ENCODE measurements at regions of chr4 and their contacts with region 1.

Region 1: DNA sequence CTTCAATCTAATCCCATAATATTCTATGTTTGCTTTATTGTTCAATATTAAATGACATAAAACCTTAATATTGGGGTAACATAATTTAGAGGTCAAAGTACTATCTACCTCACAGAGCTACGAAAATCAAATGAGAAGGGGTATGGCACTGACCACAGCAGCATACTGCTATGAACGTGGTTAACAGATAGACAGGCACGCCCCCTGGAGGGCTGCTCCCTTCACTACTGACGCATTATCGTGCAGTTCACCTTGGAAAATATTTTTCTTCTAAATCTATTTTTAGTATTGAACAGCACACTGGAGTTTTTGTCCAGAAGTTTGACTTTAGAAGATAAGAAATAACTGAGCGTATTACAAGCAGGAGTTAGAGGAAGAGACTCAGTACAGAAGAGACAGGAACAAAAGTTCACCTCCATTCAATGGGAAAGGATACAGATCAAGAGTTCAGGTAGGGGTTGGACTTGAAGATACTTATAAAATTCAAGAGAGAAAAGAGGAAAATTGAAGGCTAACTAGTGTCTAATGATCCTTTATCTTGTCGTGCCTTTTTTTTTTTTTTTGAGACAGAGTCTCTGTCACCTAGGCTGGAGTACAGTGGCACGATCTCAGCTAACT is 22.7 kb downstream of the MAP9 start:
- DNase-seq: peak; percentile 27
- ATAC-seq: peak; percentile 98
- H3K4me3 ChIP-seq: no peak overlapping the region
- H3K27ac ChIP-seq: no peak overlapping the region
- H3K4me1 ChIP-seq: no peaks in the 10 kb centered on the region
- H3K27me3 ChIP-seq: no peaks in the 10 kb centered on the region
- CTCF ChIP-seq: peak; percentile 78
- EP300 ChIP-seq: no peak
- POLR2A ChIP-seq: no peak
- RAD21 ChIP-seq: 0 out of 2 replicates have a peak, but pooled peaks have one; percentile 60

Region 2: GRCh38 chr4:154551872-154552686 is 802.0 kb before region 1 on chr4:
- CTCF ChIA-PET with region 1: no interaction called
- POLR2A ChIA-PET with region 1: no interaction called
- in situ Hi-C with region 1: no loop called
- intact Hi-C with region 1: loop called (anchors 10 kb)
- DNase-seq: peak; percentile 74
- ATAC-seq: peak; percentile 61
- H3K4me3 ChIP-seq: no peak overlapping the region
- H3K27ac ChIP-seq: no peak overlapping the region
- H3K4me1 ChIP-seq: peaks cover 21% of the 10 kb centered on the region
- H3K27me3 ChIP-seq: no peaks in the 10 kb centered on the region; a peak in 1 of 5 replicates
- CTCF ChIP-seq: peak; percentile 84
- EP300 ChIP-seq: no peak
- POLR2A ChIP-seq: no peak
- RAD21 ChIP-seq: peak; percentile 76; the same call in 1 of the 2 replicates

Region 3: GRCh38 chr4:154626793-154627484 is 727.1 kb before region 1 on chr4:
- CTCF ChIA-PET with region 1: no interaction called
- POLR2A ChIA-PET with region 1: no interaction called
- in situ Hi-C with region 1: loop called (anchors 25 kb)
- intact Hi-C with region 1: no loop called
- DNase-seq: peak; percentile 49
- ATAC-seq: peak; percentile 99
- H3K4me3 ChIP-seq: peak overlapping the region in 1 of 3 experiments; percentile 34; a peak in 1 of 6 replicates
- H3K27ac ChIP-seq: no peak overlapping the region
- H3K4me1 ChIP-seq: peaks cover 18% of the 10 kb centered on the region
- H3K27me3 ChIP-seq: peaks cover 0 to 33% of the 10 kb centered on the region in 2 experiments; a peak in 4 of 5 replicates
- CTCF ChIP-seq: peak; percentile 81
- EP300 ChIP-seq: no peak
- POLR2A ChIP-seq: no peak
- RAD21 ChIP-seq: peak; percentile 70

Region 4: GRCh38 chr4:154807042-154807630 is 546.9 kb before region 1 on chr4:
- CTCF ChIA-PET with region 1: interaction called, 8 read pairs
- POLR2A ChIA-PET with region 1: no interaction called
- in situ Hi-C with region 1: loop called (anchors 25 kb)
- intact Hi-C with region 1: loop called (anchors 1 kb)
- DNase-seq: peak; percentile 4
- ATAC-seq: no peak
- H3K4me3 ChIP-seq: no peak overlapping the region
- H3K27ac ChIP-seq: no peak overlapping the region
- H3K4me1 ChIP-seq: no peaks in the 10 kb centered on the region
- H3K27me3 ChIP-seq: no peaks in the 10 kb centered on the region
- CTCF ChIP-seq: peak; percentile 45
- EP300 ChIP-seq: no peak
- POLR2A ChIP-seq: no peak
- RAD21 ChIP-seq: no peak

Region 5: DNA sequence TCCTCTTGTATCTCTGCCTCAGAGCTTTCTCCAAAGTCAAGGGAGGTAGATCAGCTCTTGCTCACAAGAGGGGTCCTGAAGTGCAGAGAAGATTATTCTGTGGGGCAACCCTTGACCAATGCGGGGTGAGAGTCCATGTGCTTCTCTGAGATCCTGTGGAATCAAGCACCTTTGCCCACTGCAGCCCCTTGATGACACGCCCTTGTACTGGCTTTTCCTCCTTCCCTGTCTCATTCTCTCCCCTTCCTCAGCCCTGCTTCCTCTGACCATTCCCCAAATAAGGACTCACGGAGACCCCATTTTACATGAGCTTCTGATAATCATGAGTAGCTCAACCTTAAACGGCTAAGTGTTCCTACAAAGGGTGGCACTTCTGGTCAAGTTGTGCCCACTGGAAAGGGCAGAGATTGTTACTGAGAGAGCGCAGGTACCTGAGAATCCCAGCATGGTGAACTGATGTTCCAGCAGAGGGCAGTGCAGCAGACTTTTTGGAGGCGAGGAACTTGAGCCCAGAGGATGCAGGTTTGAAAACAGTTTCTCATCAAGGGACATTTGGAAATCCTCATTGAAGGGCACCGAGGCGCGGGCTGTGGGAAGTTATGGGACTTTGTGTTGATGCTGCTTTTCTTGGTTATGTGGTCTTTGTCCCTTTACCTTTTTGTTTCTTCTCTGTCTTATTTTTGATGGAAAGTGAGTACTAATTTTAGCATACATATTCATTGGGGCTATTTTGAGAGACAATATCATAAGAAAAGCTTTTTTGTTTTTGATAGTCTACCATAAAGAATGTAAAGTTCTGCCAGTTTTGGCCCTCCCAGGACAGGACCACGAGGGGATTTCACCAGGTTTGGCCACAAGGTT is 371.6 kb before region 1 on chr4:
- CTCF ChIA-PET with region 1: interaction called, 19 read pairs
- POLR2A ChIA-PET with region 1: no interaction called
- in situ Hi-C with region 1: loop called (anchors 10 kb)
- intact Hi-C with region 1: loop called (anchors 1 kb)
- DNase-seq: peak; percentile 32
- ATAC-seq: peak; percentile 93
- H3K4me3 ChIP-seq: no peak overlapping the region
- H3K27ac ChIP-seq: no peak overlapping the region
- H3K4me1 ChIP-seq: no peaks in the 10 kb centered on the region
- H3K27me3 ChIP-seq: no peaks in the 10 kb centered on the region
- CTCF ChIP-seq: peak; percentile 83
- EP300 ChIP-seq: no peak
- POLR2A ChIP-seq: no peak
- RAD21 ChIP-seq: peak; percentile 41

Region 6: DNA sequence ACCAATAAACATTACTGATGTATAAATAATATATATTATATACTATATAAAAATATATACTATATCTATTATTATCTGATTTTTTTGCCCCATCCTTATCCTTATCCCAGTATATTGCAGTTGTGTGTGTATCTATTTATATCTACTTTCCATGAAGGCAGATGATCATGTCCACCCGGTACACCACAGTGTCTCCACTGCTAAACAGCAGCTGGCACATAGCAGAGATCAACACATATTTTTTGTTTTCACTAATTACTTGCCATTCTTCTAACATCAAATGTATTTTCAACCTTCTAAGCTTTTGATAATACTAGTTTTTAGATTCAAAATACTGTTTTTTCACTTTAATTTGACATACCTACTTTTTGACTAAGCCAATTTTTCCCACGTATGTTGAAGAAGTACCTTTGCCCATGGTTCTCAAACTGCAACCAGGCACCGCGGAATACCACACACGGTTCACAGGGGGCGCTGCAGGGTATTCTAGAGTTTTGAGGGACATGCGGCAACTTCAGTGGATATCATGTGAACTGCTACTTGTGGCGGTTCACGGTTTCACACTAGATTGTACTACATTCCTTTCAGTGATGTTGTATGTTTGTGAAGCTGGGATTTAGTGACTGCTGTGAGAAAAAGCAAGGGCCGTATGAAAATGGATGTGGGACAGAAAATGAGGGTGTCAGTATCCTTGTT is 328.1 kb before region 1 on chr4:
- CTCF ChIA-PET with region 1: no interaction called
- POLR2A ChIA-PET with region 1: no interaction called
- in situ Hi-C with region 1: no loop called
- intact Hi-C with region 1: loop called (anchors 1 kb)
- DNase-seq: peak; percentile 48
- ATAC-seq: peak; percentile 95
- H3K4me3 ChIP-seq: no peak overlapping the region
- H3K27ac ChIP-seq: no peak overlapping the region
- H3K4me1 ChIP-seq: no peaks in the 10 kb centered on the region
- H3K27me3 ChIP-seq: no peaks in the 10 kb centered on the region
- CTCF ChIP-seq: peak; percentile 59
- EP300 ChIP-seq: no peak
- POLR2A ChIP-seq: no peak
- RAD21 ChIP-seq: peak; percentile 44; the same call in 1 of the 2 replicates

Region 7: DNA sequence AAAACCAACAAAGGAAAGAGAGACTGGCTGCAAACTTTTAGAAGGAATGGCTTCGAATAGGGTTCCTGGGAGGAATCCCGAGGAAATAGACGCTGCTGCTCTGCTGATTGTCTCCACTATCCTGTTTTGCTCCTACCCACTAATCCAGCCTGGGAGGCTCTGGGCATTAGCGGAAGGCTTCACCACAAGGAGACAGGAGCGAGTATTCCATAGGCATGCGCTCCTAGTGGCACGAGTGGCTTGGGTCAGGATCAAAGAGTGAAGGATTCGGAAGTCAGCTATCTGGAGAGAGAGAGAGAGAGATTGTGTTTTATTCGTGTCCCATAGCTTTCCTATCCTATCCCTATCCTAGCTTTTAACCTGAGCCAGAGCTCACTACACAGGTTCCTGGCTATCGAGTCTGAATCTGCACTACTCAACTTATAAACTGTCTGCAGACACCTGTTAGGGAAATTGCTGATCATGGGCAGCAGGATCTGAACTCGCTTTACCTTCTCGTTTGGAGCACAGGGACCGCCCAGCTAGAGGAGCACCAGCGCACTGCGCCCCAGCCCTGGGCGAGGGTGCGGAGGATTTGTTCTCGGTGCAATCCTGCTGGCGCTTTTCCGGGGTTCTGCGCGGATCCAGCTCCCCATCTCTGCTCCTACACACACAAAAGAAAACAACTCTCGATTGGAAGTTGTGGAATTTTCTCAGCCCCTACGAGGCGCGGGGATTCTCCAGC is 146.3 kb before region 1 on chr4:
- CTCF ChIA-PET with region 1: no interaction called
- POLR2A ChIA-PET with region 1: no interaction called
- in situ Hi-C with region 1: no loop called
- intact Hi-C with region 1: loop called (anchors 5 kb)
- DNase-seq: no peak
- ATAC-seq: peak; percentile 80
- H3K4me3 ChIP-seq: no peak overlapping the region
- H3K27ac ChIP-seq: no peak overlapping the region
- H3K4me1 ChIP-seq: no peaks in the 10 kb centered on the region
- H3K27me3 ChIP-seq: peaks cover 0 to 7% of the 10 kb centered on the region in 2 experiments; a peak in 2 of 5 replicates
- CTCF ChIP-seq: no peak
- EP300 ChIP-seq: no peak
- POLR2A ChIP-seq: no peak
- RAD21 ChIP-seq: no peak